Activated T-helper 1 cell treated with anti-CD3 and anti-CD28 coated beads, Interleukin-12 subunit alpha, Interleukin-12 subunit beta, Interleukin-2, Interleukin-4 antibody, amounts not matched to agents 30 ng/mL and 10 ng/mL and 1 ng/mL, durations not matched to agents 14 hours and 24 hours and 36 hours (primary cell): ENCODE measurements at regions of chr3 and their contacts with region 1.

Region 1: DNA sequence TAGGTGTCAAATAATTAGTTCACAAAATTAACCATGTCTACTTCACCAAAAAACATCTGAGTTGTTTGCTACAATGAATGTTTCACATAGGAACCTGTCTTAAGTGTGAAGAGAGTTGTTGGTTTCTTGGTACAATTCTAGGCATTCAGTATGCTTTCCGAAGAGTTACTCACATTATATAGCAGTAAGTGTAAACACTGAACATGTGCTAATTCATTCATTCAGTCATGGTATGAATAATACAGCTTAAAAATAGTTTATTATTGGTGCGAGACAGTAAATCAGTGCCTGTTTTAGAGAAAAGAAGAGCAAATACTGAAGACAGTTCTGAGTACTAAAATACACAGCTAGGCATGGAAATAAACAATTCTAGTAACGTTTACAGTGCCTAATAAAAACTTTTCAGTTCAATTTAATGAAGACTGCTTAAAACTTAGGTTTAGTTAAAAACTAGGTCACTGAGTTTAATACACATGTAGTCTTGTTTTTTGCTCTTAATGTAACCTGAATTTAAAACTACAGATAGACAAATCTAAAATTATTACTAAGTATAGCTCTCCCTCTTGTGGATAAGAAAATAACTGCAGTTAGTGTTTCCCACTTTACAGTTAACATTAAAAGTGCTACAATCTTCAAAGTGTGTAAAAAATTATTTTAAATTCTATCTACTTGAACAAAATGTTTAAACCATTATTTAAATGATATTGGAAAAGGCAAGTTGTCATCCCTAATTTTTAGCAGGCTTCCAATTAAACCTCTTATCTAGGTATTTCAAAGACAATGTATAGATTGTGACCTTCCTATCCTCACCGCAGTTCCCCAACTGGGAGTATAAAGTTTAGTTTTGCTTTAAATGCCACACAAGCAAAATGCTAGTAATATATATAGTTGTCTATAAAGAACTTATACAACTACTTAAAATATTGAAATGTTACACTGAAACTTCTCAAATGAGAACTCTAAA is 20.1 kb upstream of the ZCWPW2 start:
- DNase-seq: no peak
- H3K4me3 Mint-ChIP-seq: no peak overlapping the region
- H3K27ac Mint-ChIP-seq: peak overlapping the region; percentile 29
- H3K4me1 Mint-ChIP-seq: peaks cover 44% of the 10 kb centered on the region
- H3K27me3 Mint-ChIP-seq: peaks cover 1% of the 10 kb centered on the region

Region 2: GRCh38 chr3:27712136-27713077 is 616.1 kb before region 1 on chr3:
- intact Hi-C with region 1: loop called (anchors 1 kb)
- DNase-seq: peak; percentile 75
- H3K4me3 Mint-ChIP-seq: peak overlapping the region; percentile 90
- H3K27ac Mint-ChIP-seq: peak overlapping the region; percentile 91
- H3K4me1 Mint-ChIP-seq: peaks cover 32% of the 10 kb centered on the region
- H3K27me3 Mint-ChIP-seq: peaks cover 45% of the 10 kb centered on the region

Region 3: GRCh38 chr3:27800261-27800660 is 528.2 kb before region 1 on chr3:
- intact Hi-C with region 1: loop called (anchors 1 kb)
- DNase-seq: no peak
- H3K4me3 Mint-ChIP-seq: no peak overlapping the region
- H3K27ac Mint-ChIP-seq: peak overlapping the region; percentile 0
- H3K4me1 Mint-ChIP-seq: peaks cover 17% of the 10 kb centered on the region
- H3K27me3 Mint-ChIP-seq: no peaks in the 10 kb centered on the region

Region 4: DNA sequence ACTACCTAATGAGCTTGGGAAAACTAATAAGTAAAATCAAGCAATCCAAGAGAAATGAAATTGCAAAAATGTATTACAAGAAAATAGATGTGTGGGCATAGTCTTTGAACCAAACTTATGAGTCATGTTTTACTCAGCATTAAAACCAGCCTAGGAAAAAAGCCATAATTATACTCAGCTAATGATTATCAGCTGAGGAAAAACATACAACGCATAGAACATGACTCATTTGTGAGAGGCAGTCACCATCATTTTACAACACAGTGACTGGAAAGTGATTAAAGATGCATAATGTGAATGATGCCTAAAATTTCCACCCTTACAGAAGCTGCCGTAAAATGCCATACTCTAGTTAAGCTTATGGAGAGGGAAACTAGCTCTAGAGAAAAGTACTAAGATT is 368.3 kb before region 1 on chr3:
- intact Hi-C with region 1: loop called (anchors 1 kb)
- DNase-seq: no peak
- H3K4me3 Mint-ChIP-seq: no peak overlapping the region
- H3K27ac Mint-ChIP-seq: no peak overlapping the region
- H3K4me1 Mint-ChIP-seq: peaks cover 20% of the 10 kb centered on the region
- H3K27me3 Mint-ChIP-seq: no peaks in the 10 kb centered on the region

Region 5: DNA sequence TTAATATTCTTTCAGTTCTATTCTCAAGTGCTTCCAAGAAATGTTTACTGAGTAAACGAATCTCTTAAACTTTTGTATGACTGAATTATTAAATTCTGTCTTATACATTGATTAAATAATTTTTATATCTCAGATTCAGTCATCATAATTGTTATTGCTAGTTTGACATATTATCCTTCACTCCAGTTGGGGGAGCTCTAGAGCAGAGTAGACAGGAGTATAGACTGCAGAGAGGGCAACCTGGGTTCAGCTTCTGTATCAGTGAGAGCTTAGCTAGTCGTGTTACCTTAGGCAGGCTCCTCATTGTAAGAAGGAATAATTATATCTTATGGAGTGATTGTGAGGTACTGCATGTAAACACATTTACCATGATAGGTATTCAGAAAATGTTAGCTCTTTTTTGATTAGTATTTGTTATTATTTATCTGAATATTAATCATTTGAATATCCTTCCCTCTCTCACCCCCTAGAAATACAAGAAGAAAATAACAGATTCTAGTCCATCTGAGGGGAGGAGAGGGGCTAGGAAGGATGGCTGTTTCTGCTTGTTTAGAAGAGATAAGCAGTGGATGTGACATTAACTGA is 10.9 kb before region 1 on chr3:
- intact Hi-C with region 1: loop called (anchors 1 kb)
- DNase-seq: peak; percentile 31
- H3K4me3 Mint-ChIP-seq: no peak overlapping the region
- H3K27ac Mint-ChIP-seq: no peak overlapping the region
- H3K4me1 Mint-ChIP-seq: peaks cover 28% of the 10 kb centered on the region
- H3K27me3 Mint-ChIP-seq: no peaks in the 10 kb centered on the region

Region 6: DNA sequence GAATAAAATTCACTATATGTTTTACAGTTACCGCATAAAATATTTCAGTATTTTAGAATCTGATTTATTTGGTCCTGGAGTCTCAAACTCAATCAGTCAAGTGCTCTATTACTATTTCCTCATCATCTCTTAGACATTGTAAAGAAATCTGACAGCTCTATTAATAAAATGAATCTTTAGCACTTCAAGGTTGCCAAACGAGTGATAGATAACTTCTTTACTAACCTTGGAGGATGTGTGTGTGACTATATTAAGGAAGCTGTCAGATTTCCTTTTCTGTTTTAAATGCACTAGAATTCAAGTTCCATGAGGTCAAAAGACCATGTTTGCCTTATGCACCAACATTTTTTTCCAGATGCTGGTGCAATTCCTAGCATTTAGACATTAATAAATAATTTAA is 410.0 kb after region 1 on chr3:
- intact Hi-C with region 1: no loop called
- DNase-seq: no peak
- H3K4me3 Mint-ChIP-seq: no peak overlapping the region
- H3K27ac Mint-ChIP-seq: no peak overlapping the region
- H3K4me1 Mint-ChIP-seq: no peaks in the 10 kb centered on the region
- H3K27me3 Mint-ChIP-seq: peaks cover 2% of the 10 kb centered on the region